Gastrocnemius medialis (tissue), 4 donors: ENCODE measurements at regions of chr3 and their contacts with region 1.

Region 1: DNA sequence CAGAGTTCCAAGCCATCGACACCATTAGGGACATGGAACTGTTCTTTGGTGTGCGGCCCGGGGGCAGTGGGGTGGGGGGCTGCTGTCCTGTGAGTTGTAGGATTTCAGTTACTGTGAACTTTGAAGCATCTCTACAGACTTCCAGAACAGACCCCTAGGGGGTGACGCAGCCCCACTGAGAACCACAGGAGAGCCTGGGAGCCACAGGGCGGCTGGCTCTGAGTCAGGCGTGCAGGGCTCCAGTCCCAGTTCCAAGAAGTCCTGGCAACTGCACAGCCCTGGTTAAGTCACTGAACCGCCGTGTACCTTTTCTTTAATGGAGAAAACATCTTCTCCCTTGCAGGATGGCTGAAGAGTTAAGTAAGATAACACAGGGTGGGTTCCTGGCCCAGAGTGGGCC is 23.5 kb upstream of the LRTM1 start:
- DNase-seq: peak; percentile 77 to 78
- ATAC-seq: peak; percentile 92 to 97
- H3K4me3 ChIP-seq: peak overlapping the region in 1 of 4 donors; percentile 20
- H3K27ac ChIP-seq: no peak overlapping the region
- H3K4me1 ChIP-seq: peaks cover 16 to 20% of the 10 kb centered on the region in 2 donors
- H3K27me3 ChIP-seq: no peaks in the 10 kb centered on the region
- CTCF ChIP-seq: peak; percentile 47 to 73 (median 66)
- POLR2A ChIP-seq: no peak

Region 2: DNA sequence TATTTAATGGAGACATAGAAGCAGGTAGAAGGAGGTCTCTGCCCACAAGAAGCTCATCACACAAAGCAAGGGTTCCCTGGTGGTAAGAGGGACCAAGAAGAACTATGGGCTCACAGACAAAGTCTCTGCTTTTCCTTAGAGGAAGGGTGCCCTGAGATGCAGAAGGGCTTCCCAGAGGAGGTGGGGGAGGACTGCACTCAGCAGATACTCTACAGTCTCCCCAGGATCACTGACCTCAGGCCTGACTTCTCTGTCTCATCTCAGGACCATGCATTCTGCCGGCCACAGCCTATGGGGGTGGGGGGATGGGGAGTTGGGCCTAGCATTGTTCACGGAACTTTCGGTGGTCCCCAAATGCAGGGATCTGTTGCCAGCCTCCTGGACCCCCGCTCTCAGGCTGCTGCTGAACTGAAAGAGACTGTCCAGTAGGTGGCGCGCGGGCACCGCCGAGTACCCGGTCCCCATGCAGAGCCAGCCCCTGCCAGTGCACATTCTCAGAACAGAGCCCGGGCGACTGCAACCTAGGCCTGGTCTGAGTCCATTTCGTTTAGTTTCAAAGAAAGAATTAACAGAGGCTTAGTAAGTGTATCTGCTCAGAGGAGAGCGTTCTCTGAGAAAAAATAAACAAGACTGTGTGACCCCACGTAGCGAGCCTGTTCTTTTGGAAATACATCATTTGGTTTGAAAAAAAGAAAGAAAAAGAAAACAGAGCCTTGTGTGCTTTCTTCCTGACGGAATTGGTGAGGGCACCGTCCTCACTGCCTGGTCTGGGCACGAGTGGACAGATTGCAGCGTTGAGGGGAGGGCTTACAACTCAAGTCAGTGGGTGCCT is 97.6 kb before region 1 on chr3:
- in situ Hi-C with region 1: loop called in 1 of 4 experiments (anchors 25 kb)
- intact Hi-C with region 1: no loop called
- DNase-seq: peak; percentile 47 to 55
- ATAC-seq: peak; percentile 70 to 75
- H3K4me3 ChIP-seq: no peak overlapping the region
- H3K27ac ChIP-seq: no peak overlapping the region
- H3K4me1 ChIP-seq: peaks cover 5 to 11% of the 10 kb centered on the region in 2 donors
- H3K27me3 ChIP-seq: no peaks in the 10 kb centered on the region
- CTCF ChIP-seq: peak; percentile 78 to 91 (median 87)
- POLR2A ChIP-seq: no peak

Region 3: DNA sequence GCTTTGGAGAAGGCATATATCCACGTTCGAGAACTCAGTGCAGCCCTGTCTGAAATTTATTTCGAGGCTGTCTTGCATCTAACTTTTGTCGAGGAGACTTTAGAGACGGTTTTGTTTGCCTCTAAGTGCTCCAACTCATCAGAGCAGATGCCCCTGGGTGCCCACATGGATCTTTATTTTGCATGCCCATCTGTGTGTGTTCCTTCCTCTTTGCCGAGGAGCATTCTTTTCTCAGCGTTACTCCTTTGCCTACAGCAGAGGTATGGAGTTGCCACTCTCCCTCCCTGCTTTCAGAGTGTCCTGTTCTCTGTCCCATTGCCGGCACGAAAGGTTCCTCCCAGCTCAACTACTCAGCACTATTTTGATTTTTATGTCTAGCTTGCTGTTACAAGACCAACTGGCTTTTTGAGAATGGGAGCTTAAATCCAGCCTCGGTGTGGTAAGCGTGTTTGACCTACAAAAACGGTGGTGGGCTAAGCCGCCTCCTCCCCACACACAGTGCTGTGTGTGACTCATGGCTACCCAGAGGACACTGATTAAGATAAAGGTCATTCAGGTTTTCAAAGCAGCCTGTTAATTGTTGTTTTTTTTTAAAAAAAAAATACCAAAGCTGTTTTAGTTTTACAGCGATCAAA is 88.2 kb before region 1 on chr3:
- in situ Hi-C with region 1: loop called in 2 of 4 experiments (anchors 10 to 25 kb)
- intact Hi-C with region 1: no loop called
- DNase-seq: no peak
- ATAC-seq: no peak
- H3K4me3 ChIP-seq: no peak overlapping the region
- H3K27ac ChIP-seq: no peak overlapping the region
- H3K4me1 ChIP-seq: peaks cover 8 to 19% of the 10 kb centered on the region in 2 donors
- H3K27me3 ChIP-seq: no peaks in the 10 kb centered on the region
- CTCF ChIP-seq: no peak
- POLR2A ChIP-seq: no peak

Region 4: GRCh38 chr3:54870423-54870822 is 81.0 kb before region 1 on chr3:
- in situ Hi-C with region 1: loop called in 2 of 4 experiments (anchors 10 to 25 kb)
- intact Hi-C with region 1: loop called (anchors 5 kb)
- DNase-seq: no peak
- ATAC-seq: peak; percentile 84 to 86
- H3K4me3 ChIP-seq: no peak overlapping the region
- H3K27ac ChIP-seq: no peak overlapping the region
- H3K4me1 ChIP-seq: peaks cover 0 to 3% of the 10 kb centered on the region in 2 donors
- H3K27me3 ChIP-seq: no peaks in the 10 kb centered on the region
- CTCF ChIP-seq: peak; percentile 31 to 59 (median 45)
- POLR2A ChIP-seq: no peak

Region 5: GRCh38 chr3:54891548-54892120 is 59.8 kb before region 1 on chr3:
- in situ Hi-C with region 1: no loop called
- intact Hi-C with region 1: loop called (anchors 5 kb)
- DNase-seq: peak; percentile 91 to 94
- ATAC-seq: peak; percentile 96 to 98
- H3K4me3 ChIP-seq: no peak overlapping the region
- H3K27ac ChIP-seq: peak overlapping the region; percentile 78 to 93 (median 84)
- H3K4me1 ChIP-seq: peaks cover 33 to 49% of the 10 kb centered on the region in 2 donors
- H3K27me3 ChIP-seq: no peaks in the 10 kb centered on the region
- CTCF ChIP-seq: peak; percentile 48 to 69 (median 60)
- POLR2A ChIP-seq: no peak

Region 6: GRCh38 chr3:55169608-55170010 is 218.2 kb after region 1 on chr3:
- in situ Hi-C with region 1: loop called in 1 of 4 experiments (anchors 10 kb)
- intact Hi-C with region 1: no loop called
- DNase-seq: no peak
- ATAC-seq: no peak
- H3K4me3 ChIP-seq: no peak overlapping the region
- H3K27ac ChIP-seq: no peak overlapping the region
- H3K4me1 ChIP-seq: peaks cover 0 to 3% of the 10 kb centered on the region in 2 donors
- H3K27me3 ChIP-seq: no peaks in the 10 kb centered on the region
- CTCF ChIP-seq: no peak
- POLR2A ChIP-seq: no peak

Region 7: GRCh38 chr3:55180936-55181535 is 229.6 kb after region 1 on chr3:
- in situ Hi-C with region 1: loop called in 1 of 4 experiments (anchors 10 kb)
- intact Hi-C with region 1: loop called (anchors 1 kb)
- DNase-seq: no peak
- ATAC-seq: no peak
- H3K4me3 ChIP-seq: no peak overlapping the region
- H3K27ac ChIP-seq: no peak overlapping the region
- H3K4me1 ChIP-seq: no peaks in the 10 kb centered on the region
- H3K27me3 ChIP-seq: no peaks in the 10 kb centered on the region
- CTCF ChIP-seq: peak; percentile 41 to 77 (median 58)
- POLR2A ChIP-seq: no peak